ENCODE measurements at regions of chr11 and their contacts with region 1.

Region 1: DNA sequence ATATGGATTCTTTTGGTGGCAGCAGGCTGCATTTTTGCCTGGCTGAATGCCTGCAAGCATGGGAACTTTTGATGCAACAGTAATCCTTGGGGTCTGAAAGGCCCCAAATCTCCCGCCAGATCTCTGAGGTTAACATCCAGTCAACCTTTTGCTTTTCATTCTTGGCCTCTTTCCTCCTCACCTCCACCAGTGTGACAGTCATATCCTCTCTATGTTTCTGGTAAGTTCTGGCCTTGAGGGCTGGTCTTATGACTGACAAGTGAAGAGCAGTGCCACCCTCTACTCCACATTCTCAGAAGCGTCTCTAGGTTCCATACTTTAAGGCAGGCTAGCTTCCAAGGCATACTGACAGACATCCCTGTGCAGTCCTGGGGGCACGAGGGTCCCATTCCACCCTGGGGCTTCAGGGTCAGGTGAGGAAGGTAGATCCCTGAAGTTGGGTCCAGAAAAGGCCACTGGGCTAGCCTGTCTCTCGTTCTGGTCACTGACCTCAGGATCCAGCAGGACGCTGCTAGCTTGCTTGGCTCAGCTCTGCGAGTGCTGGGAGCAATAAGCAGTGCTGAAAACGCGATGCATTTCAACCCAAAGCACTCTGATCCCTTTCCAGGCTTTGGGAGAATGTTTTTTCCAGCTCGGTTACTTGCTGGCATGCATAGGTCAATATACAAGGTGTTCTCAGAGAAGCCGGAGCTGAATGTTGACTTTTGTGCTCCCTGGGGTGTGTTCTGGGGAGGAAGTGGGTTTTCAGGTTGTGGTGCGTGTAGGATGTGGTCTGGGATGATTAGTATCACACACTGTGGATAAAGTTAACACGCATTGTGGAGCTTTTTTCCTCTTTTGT is 75.2 kb downstream of the PTPRJ start:
- DNase-seq: peak; percentile 81
- ATAC-seq: peak; percentile 92
- H3K4me3 Mint-ChIP-seq: peak overlapping the region; percentile 56
- H3K27ac Mint-ChIP-seq: peak overlapping the region; percentile 85
- H3K4me1 Mint-ChIP-seq: peaks cover 77% of the 10 kb centered on the region
- H3K27me3 Mint-ChIP-seq: no peaks in the 10 kb centered on the region

Region 2: DNA sequence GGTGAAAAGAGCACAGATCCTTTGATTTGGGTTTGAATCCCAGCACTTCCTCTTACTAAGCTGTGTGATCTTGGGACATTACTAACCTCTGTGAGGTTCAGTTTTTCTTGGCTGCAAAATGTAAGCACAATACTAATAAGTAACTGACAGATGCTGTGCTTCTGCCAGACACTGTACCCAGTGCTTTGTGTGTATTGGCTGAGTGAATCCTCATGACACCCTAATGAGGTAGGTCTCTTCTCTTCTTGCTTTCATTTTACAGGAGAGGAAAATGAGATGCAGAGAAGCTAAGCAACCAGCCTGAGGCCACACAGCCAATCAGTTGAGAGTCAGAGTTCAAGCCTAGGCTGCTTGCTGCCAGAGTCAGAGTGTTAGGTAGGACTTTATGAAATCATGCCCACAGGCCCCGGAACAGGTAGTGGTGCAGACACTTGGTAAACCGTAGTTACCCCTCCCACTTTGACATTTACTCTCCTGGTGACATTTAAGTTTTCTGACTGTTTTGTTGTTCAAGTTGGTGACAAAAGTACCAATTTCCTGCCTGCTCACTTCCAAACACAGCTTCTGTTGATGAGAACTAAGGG is 54.0 kb before region 1 on chr11:
- POLR2A ChIA-PET with region 1: interaction called, 58 read pairs
- DNase-seq: peak; percentile 72
- ATAC-seq: peak; percentile 96
- H3K4me3 Mint-ChIP-seq: peak overlapping the region; percentile 80
- H3K27ac Mint-ChIP-seq: peak overlapping the region; percentile 97
- H3K4me1 Mint-ChIP-seq: peaks cover 63% of the 10 kb centered on the region
- H3K27me3 Mint-ChIP-seq: no peaks in the 10 kb centered on the region

Region 3: GRCh38 chr11:48013269-48013901 is 42.1 kb before region 1 on chr11:
- POLR2A ChIA-PET with region 1: interaction called, 20 read pairs
- DNase-seq: peak; percentile 57
- ATAC-seq: peak; percentile 41
- H3K4me3 Mint-ChIP-seq: peak overlapping the region; percentile 62
- H3K27ac Mint-ChIP-seq: peak overlapping the region; percentile 96
- H3K4me1 Mint-ChIP-seq: peaks cover 79% of the 10 kb centered on the region
- H3K27me3 Mint-ChIP-seq: no peaks in the 10 kb centered on the region

Region 4: DNA sequence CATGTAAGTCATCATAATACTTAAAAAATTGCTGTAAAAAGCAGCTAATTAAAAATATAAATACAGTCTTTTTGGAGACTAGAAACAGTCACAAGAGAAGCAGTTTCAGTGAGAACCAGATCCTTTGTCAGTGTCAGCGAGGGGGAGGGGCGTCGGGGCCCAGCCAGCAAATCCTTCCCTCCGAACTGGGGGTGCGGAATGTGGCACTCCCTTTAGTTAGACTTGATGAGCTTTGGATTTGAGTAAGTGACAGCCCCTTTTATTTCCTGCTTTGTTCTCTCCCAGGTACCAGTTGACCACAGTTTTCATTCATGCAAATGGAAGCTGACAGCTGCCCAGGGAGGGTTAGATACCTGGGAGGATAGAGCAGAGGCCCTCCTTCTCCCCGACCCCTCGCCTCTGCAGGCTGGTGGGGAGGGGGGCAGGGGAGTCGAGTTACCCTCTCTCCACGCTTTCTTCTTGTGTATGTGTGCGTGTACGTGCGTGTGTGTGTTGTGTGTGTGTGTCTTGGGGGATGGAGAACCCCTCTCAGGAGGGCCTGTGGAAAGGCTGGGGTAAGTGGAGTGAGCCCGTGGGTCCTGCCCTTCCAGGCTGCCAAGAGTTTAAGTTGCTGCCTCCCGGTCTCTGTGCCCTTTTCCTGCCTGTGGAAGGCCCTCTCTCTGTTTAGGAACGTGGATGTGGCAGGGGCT is 36.8 kb before region 1 on chr11:
- POLR2A ChIA-PET with region 1: interaction called, 20 read pairs
- DNase-seq: no peak
- ATAC-seq: no peak
- H3K4me3 Mint-ChIP-seq: no peak overlapping the region
- H3K27ac Mint-ChIP-seq: peak overlapping the region; percentile 68
- H3K4me1 Mint-ChIP-seq: peaks cover 57% of the 10 kb centered on the region
- H3K27me3 Mint-ChIP-seq: no peaks in the 10 kb centered on the region

Region 5: DNA sequence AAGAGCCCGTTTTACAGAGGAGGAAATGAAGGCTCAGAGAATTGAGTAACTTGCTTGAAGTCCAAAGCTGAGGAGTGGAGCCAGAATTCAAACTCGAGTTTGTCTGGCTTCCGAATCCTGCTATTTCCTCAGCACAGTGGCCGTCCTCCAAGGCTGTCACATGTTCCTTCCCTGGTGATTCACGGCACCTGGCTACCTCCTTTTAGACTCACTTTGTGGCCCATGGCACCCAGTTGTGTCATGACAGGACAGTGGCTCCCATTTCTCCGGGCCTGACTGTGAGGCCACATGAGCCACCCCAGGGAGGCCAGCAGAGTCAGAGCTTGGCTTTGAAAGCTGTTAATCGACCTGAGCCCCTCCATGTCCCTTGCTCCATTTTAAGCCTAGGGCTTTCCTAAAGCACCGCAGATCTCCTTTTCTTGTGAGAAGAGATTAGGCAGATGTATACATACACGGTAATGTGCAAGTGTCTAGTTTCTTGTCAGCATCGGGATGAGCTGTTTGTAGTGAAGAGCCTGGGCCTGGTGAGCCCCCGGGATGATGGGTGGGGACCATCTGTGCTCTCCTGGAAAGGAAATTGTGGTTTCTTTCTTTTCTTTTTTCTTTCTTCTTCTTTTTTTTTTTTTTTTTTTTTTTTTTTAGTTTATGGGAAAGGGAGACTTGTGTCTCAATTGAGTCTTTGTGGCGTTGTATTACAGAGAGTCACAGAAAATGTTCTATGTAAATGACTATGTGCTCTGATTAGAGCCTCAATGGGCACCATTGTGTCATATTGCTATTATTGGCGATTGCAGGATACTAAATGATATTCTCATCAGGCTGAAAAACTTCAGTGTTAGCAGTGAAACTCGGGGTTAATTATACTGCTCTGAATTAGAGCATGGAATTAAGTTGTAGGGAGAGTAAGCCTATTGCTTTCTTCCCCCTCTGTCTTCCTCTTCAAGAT is 20.3 kb before region 1 on chr11:
- POLR2A ChIA-PET with region 1: interaction called, 17 read pairs
- DNase-seq: no peak
- ATAC-seq: no peak
- H3K4me3 Mint-ChIP-seq: peak overlapping the region; percentile 51
- H3K27ac Mint-ChIP-seq: peak overlapping the region; percentile 60
- H3K4me1 Mint-ChIP-seq: peaks cover 49% of the 10 kb centered on the region
- H3K27me3 Mint-ChIP-seq: no peaks in the 10 kb centered on the region

Region 6: DNA sequence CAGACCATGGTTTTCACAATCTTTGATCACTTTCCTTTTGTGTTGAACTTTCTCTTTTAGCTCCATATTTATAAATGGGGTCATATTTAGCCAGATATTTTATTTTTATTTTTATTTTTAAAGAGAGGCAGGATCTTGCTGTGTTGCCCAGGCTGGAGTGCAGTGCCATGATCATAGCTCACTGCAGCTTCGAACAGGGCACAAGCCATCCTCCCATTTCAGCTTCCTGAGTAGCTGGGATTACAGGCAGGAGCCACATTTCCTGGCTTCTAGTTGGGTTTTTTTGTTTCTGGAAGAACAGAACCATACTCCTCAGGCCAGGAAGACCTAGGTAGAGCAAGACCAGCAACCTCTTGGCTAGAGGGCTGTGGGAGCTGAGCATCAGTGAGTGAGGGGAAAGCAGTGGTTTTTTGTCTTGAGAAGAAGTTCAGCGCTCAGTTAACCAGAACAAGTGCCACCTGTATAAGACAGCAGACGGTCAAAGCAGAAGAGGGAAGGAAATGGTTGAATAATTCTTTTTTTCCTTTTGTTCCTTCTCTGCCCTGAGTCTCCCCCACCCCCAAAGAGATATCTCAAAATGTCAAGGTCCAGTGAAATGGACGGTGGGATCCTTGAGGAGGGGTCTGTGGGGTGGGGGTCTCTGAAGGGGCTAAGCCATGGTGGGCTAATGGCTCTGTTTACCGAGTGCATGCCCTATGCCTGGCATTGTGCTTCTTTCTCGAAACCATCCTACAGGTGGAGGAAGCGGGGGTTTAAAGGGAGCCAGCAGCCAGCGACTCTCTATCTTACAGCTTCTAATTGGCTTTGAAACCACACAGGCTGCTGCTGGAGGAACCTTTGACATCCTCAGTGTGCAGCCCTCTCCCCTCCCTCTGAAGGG is 12.2 kb before region 1 on chr11:
- POLR2A ChIA-PET with region 1: interaction called, 16 read pairs
- DNase-seq: no peak
- ATAC-seq: peak; percentile 90
- H3K4me3 Mint-ChIP-seq: peak overlapping the region; percentile 44
- H3K27ac Mint-ChIP-seq: peak overlapping the region; percentile 74
- H3K4me1 Mint-ChIP-seq: peaks cover 46% of the 10 kb centered on the region
- H3K27me3 Mint-ChIP-seq: no peaks in the 10 kb centered on the region